Heart left ventricle (tissue), 16 donors: ENCODE measurements at regions of chr5 and their contacts with region 1.

Region 1: GRCh38 chr5:31825518-31826068 is 186.7 kb downstream of the PDZD2 start:
- DNase-seq: peak in 2 of 5 donors; percentile 48
- ATAC-seq: peak; percentile 75 to 88 (median 83)
- H3K4me3 ChIP-seq: no peak overlapping the region
- H3K27ac ChIP-seq: peak overlapping the region in 2 of 12 donors; percentile 9 to 10
- H3K4me1 ChIP-seq: peaks cover 0 to 18% (median 12%) of the 10 kb centered on the region in 12 donors
- H3K27me3 ChIP-seq: no peaks in the 10 kb centered on the region
- CTCF ChIP-seq: peak; percentile 58 to 85 (median 74)
- POLR2A ChIP-seq: no peak

Region 2: DNA sequence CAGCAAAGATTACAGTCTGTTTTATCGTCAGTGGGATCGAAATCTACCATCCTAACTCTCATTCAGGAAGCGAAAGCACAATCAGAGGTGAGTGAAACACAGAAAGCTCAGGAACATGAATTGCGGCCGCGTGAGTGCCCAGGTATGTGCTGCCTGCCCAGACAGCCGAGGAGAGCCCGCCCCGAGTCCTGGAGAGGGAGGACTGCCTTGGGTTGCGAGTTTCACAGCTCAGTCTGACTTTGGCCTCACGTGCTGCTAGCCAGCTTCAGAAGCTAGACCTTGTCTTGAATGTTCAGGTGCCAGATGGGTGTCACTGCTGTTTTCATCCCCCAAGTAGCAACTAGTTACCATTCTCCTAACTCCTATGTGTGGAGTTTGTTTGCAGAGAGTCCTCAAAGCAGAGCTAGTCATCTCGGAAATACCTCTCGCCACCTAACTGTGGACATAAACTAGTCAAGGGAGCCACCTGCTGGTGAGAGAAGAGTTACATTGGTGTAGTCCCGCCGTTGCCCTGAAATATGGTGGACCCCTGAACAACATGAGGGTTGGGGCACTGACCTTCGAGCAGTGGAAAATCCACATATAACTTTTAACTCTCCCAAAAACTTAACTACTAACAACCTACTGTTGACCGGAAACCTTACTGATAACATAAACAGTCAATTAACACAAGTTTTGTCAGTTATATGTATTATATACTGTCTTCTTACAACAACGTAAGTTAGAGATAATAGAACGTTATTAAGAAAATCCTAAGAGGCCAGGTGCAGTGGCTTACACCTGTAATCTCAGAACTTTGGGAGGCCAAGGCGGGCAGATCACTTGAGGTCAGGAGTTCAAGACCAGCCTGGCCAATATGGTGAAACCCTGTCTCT is 267.6 kb after region 1 on chr5:
- intact Hi-C with region 1: loop called in 9 of 10 experiments (anchors 1 to 5 kb)
- DNase-seq: peak in 4 of 5 donors; percentile 55 to 66 (median 60)
- ATAC-seq: peak; percentile 59 to 82 (median 79)
- H3K4me3 ChIP-seq: no peak overlapping the region
- H3K27ac ChIP-seq: no peak overlapping the region
- H3K4me1 ChIP-seq: peaks cover 0 to 26% (median 11%) of the 10 kb centered on the region in 12 donors
- H3K27me3 ChIP-seq: no peaks in the 10 kb centered on the region
- CTCF ChIP-seq: peak; percentile 53 to 80 (median 74)
- POLR2A ChIP-seq: no peak